Activated CD4-positive, alpha-beta T cell treated with anti-CD3 and anti-CD28 coated beads for 36 hours (primary cell): ENCODE measurements at regions of chr14 and their contacts with region 1.

Region 1: GRCh38 chr14:70622111-70622712 is 19.5 kb upstream of the TTC9 start:
- DNase-seq: peak; percentile 68
- ATAC-seq: peak; percentile 80
- H3K4me3 Mint-ChIP-seq: no peak overlapping the region
- H3K27ac Mint-ChIP-seq: no peak overlapping the region
- H3K4me1 Mint-ChIP-seq: no peaks in the 10 kb centered on the region
- H3K27me3 Mint-ChIP-seq: no peaks in the 10 kb centered on the region

Region 2: DNA sequence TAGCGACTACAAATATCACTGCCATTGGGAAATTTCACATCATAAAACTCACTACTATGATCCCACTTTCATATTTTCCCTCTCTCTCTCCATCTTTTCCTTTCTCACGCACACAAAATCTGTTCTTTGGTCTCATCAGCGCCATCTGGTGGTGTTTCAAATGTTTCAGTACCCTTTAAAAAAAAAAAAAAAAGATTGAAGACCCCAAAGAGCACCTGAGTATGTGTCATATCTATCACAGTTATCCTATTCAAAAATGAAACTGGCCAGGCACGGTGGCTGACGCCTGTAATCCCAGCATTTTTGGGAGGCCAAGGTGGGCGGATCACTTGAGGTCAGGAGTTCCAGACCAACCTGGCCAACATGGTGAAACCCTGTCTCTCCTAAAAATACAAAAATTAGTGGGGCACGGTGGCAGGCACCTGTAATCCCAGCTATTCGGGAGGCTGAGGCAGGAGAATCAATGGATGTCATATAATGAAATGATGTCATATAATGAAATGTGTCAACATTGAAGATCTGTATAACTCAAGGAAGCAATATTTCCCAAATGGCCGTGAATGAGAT is 91.9 kb after region 1 on chr14:
- CTCF ChIA-PET with region 1: interaction called, 10 read pairs
- POLR2A ChIA-PET with region 1: interaction called, 5 read pairs
- intact Hi-C with region 1: loop called (anchors 1 kb)
- DNase-seq: peak; percentile 64
- ATAC-seq: no peak
- H3K4me3 Mint-ChIP-seq: no peak overlapping the region
- H3K27ac Mint-ChIP-seq: no peak overlapping the region
- H3K4me1 Mint-ChIP-seq: peaks cover 3% of the 10 kb centered on the region
- H3K27me3 Mint-ChIP-seq: no peaks in the 10 kb centered on the region

Region 3: GRCh38 chr14:70816525-70816924 is 194.3 kb after region 1 on chr14:
- CTCF ChIA-PET with region 1: interaction called, 13 read pairs
- POLR2A ChIA-PET with region 1: no interaction called
- intact Hi-C with region 1: loop called (anchors 1 kb)
- DNase-seq: no peak
- ATAC-seq: no peak
- H3K4me3 Mint-ChIP-seq: no peak overlapping the region
- H3K27ac Mint-ChIP-seq: no peak overlapping the region
- H3K4me1 Mint-ChIP-seq: peaks cover 10% of the 10 kb centered on the region
- H3K27me3 Mint-ChIP-seq: peaks cover 15% of the 10 kb centered on the region